ENCODE measurements at regions of chr11 and their contacts with region 1.

Region 1: GRCh38 chr11:111601979-111602864 is at the start of gene SIK2:
- DNase-seq: peak; percentile 89 to 97 (median 94)
- H3K4me3 ChIP-seq: peak within 1 kb of the TSS; percentile 61 to 100 (median 95)
- H3K27ac ChIP-seq: peak within 1 kb of the TSS; percentile 86 to 100 (median 98)
- H3K27me3 ChIP-seq: no peaks in the 10 kb centered on the region
- CTCF ChIP-seq: peak; percentile 53 to 99 (median 91)
- total RNA-seq, gene SIK2: 33.1 to 72.4 (median 50.6) TPM

Region 2: DNA sequence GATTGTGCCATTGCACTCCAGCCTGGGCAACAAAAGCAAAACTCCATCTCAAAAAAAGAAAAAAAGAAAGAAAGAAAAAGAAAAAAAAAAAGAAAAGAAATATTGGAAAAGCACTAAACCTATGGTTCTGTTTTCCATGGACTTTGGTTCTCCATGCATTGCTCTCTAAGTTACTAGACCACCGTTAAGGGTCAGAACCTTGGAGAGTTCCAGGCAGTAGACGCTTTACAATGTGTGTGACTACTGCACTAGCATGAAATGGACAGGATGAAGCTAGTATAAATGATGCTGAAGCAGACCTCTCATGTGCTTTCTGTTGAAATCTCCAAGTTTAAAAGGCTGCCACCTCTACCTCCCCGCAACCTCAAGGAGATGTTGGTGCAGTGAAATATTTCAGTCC is 63.6 kb after region 1 on chr11:
- intact Hi-C with region 1: no loop called
- DNase-seq: no peak
- H3K4me3 ChIP-seq: no peak overlapping the region
- H3K27ac ChIP-seq: no peak overlapping the region
- H3K27me3 ChIP-seq: no peaks in the 10 kb centered on the region
- CTCF ChIP-seq: no peak

Region 3: GRCh38 chr11:111735262-111736116 is 133.3 kb after region 1 on chr11:
- intact Hi-C with region 1: loop called (anchors 1 to 2 kb)
- DNase-seq: peak; percentile 60 to 88 (median 79)
- H3K4me3 ChIP-seq: peak overlapping the region; percentile 8 to 73 (median 52)
- H3K27ac ChIP-seq: peak overlapping the region; percentile 96 to 100 (median 100)
- H3K27me3 ChIP-seq: no peaks in the 10 kb centered on the region
- CTCF ChIP-seq: peak in 40 of 56 donors; percentile 3 to 68 (median 34)

Region 4: DNA sequence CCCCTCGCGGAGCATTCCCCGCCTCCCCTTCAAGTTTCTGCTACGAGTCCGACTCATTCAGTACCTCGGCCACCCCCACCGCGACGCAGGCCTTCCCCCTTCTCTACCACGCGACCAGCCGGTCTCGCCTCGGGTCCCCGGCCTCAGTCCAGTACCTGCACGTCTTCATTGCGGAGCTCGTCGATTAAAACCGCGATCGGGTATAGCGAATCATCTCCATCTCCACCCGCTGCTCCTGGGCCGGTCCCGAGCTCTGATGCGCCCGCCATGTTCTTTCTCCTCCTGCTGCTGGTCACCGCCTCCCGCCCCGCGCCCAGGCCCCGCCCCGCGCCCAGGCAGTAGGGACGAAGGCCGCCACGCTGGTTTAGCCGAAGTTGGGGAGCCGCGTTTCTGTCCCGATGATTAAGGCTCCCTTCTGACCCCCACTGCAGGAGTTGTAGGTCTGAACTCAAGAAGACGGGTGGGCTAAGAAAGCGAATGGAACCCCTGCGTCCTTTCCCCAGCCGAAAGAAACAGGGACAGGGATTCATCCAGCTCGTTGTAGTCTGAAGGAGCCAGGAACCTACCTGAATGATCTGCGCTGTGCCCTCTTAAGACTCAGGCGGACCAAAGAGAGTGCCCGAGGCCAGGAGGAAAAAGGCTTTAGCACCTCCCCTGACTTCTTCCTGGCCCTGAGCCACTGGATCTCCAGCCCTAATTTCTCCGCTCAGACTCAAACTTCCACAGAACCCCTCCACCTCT is 164.0 kb after region 1 on chr11 and contains the start of gene PPP2R1B:
- intact Hi-C with region 1: loop called (anchors 1 to 2 kb)
- DNase-seq: peak; percentile 65 to 88 (median 78)
- H3K4me3 ChIP-seq: peak within 1 kb of the TSS; percentile 65 to 99 (median 93)
- H3K27ac ChIP-seq: peak within 1 kb of the TSS; percentile 39 to 96 (median 89)
- H3K27me3 ChIP-seq: no peaks in the 10 kb centered on the region
- CTCF ChIP-seq: peak in 4 of 56 donors; percentile 6 to 20 (median 10)
- total RNA-seq, gene PPP2R1B: 19.2 to 62.5 (median 34.1) TPM

Region 5: GRCh38 chr11:111841370-111842053 is 239.3 kb after region 1 on chr11:
- intact Hi-C with region 1: loop called (anchors 5 kb)
- DNase-seq: peak; percentile 85 to 98 (median 92)
- H3K4me3 ChIP-seq: peak overlapping the region in 10 of 59 donors; percentile 0 to 25 (median 15)
- H3K27ac ChIP-seq: peak overlapping the region in 48 of 59 donors; percentile 0 to 75 (median 44)
- H3K27me3 ChIP-seq: no peaks in the 10 kb centered on the region
- CTCF ChIP-seq: peak; percentile 86 to 99 (median 96)